Activated T-helper 1 cell treated with anti-CD3 and anti-CD28 coated beads, Interleukin-12 subunit alpha, Interleukin-12 subunit beta, Interleukin-2, Interleukin-4 antibody, amounts not matched to agents 30 ng/mL and 10 ng/mL and 1 ng/mL, durations not matched to agents 14 hours and 24 hours and 36 hours (primary cell): ENCODE measurements at regions of chr15 and their contacts with region 1.

Region 1: DNA sequence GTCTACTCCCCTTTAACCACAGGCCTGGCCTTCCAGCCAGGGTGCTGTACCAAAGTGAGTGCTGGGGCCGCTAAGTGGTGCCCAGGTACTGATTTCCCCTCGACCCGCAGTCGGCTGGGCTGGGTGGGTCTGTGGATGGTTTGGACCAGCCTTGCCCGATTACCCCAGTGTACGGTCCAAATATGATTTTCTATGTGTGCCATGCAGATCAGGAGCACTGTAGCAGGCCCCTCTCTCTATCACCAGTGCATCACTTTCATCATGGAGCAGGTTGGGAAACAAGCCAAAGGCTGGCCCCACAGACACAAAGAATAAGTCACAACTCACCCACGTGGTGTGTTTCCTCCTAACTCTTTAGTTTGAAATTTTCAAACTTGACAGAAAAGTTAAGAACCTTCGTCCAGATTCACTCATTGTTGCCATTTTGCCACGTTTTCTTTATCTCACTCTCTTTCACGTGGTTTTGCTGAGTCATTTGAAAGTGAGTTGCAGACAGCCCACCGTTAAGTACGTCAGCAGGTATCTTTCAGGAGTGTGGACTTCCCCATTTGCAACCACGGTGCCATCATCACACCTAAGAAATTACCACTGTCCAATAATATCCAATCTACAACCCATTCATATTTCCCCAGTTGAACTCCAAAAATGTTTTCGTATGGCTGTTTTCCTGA is 37.0 kb downstream of the ZNF710 start:
- DNase-seq: peak; percentile 48
- H3K4me3 Mint-ChIP-seq: peak overlapping the region; percentile 63
- H3K27ac Mint-ChIP-seq: peak overlapping the region; percentile 89
- H3K4me1 Mint-ChIP-seq: peaks cover 77% of the 10 kb centered on the region
- H3K27me3 Mint-ChIP-seq: no peaks in the 10 kb centered on the region

Region 2: GRCh38 chr15:89912145-89912673 is 125.9 kb before region 1 on chr15:
- intact Hi-C with region 1: no loop called
- DNase-seq: no peak
- H3K4me3 Mint-ChIP-seq: no peak overlapping the region
- H3K27ac Mint-ChIP-seq: no peak overlapping the region
- H3K4me1 Mint-ChIP-seq: no peaks in the 10 kb centered on the region
- H3K27me3 Mint-ChIP-seq: peaks cover 48% of the 10 kb centered on the region

Region 3: DNA sequence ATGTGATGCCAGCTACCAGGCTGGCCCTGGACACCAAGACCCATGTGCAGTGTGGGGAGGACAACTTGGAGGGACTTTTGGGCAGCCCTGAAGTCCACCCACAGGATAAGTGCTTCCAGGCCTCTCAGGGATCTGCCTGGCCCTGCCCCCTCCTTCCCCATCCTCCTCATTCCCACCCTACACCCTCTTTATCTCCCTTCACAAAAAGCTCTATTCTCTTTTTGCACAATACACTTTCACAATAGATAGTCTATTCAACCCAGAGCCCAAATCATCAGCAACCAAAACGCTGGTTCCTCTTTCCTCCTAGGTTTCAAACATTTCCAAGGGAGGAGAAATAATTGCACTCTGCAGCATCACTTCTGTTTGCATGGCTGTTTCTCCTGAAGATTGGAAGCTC is 44.7 kb before region 1 on chr15:
- intact Hi-C with region 1: no loop called
- DNase-seq: no peak
- H3K4me3 Mint-ChIP-seq: no peak overlapping the region
- H3K27ac Mint-ChIP-seq: no peak overlapping the region
- H3K4me1 Mint-ChIP-seq: no peaks in the 10 kb centered on the region
- H3K27me3 Mint-ChIP-seq: peaks cover 8% of the 10 kb centered on the region

Region 4: GRCh38 chr15:90013503-90013937 is 24.6 kb before region 1 on chr15:
- intact Hi-C with region 1: loop called (anchors 1 kb)
- DNase-seq: peak; percentile 36
- H3K4me3 Mint-ChIP-seq: peak overlapping the region; percentile 27
- H3K27ac Mint-ChIP-seq: peak overlapping the region; percentile 61
- H3K4me1 Mint-ChIP-seq: peaks cover 50% of the 10 kb centered on the region
- H3K27me3 Mint-ChIP-seq: no peaks in the 10 kb centered on the region

Region 5: GRCh38 chr15:90059208-90059985 is 21.3 kb after region 1 on chr15:
- intact Hi-C with region 1: loop called (anchors 1 kb)
- DNase-seq: peak; percentile 69
- H3K4me3 Mint-ChIP-seq: peak overlapping the region; percentile 35
- H3K27ac Mint-ChIP-seq: peak overlapping the region; percentile 85
- H3K4me1 Mint-ChIP-seq: peaks cover 25% of the 10 kb centered on the region
- H3K27me3 Mint-ChIP-seq: no peaks in the 10 kb centered on the region

Region 6: DNA sequence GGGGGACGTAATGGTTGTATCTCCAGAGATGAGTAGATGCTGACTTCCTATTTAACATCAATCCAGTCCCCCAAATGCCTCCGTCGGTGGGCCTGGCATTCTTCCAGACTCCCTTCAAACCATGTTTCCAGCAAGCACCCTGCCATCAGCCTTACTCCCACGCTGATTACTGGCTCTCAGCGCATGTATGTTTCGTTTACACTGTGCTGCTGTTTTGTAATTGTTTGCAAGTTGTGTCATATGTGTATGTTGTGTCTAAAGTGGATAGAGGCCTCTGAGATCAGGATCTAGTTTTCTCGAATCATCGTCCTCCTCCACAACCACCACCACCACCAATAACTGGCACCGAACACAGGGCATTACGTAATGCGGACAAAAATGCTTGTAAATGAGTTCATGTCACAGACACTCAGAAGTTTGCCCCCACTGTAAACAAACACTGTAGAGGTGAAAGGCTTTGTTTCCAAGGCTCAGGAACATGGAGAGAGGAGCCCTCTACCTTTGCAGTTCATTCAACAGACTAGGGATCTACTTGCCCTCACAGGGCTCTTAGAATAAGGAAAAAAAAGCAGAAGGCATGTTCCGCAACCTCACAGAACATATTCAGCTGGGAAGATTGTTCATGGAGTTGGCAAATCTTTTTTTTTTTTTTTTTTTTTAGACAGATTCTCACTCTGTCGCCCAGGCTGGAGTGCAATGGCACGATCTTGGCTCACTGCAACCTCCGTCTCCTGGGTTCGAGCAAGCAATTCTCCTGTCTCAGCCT is 116.9 kb after region 1 on chr15:
- intact Hi-C with region 1: no loop called
- DNase-seq: no peak
- H3K4me3 Mint-ChIP-seq: no peak overlapping the region
- H3K27ac Mint-ChIP-seq: no peak overlapping the region
- H3K4me1 Mint-ChIP-seq: peaks cover 24% of the 10 kb centered on the region
- H3K27me3 Mint-ChIP-seq: peaks cover 2% of the 10 kb centered on the region